ENCODE measurements at regions of chr19 and their contacts with region 1.

Region 1: DNA sequence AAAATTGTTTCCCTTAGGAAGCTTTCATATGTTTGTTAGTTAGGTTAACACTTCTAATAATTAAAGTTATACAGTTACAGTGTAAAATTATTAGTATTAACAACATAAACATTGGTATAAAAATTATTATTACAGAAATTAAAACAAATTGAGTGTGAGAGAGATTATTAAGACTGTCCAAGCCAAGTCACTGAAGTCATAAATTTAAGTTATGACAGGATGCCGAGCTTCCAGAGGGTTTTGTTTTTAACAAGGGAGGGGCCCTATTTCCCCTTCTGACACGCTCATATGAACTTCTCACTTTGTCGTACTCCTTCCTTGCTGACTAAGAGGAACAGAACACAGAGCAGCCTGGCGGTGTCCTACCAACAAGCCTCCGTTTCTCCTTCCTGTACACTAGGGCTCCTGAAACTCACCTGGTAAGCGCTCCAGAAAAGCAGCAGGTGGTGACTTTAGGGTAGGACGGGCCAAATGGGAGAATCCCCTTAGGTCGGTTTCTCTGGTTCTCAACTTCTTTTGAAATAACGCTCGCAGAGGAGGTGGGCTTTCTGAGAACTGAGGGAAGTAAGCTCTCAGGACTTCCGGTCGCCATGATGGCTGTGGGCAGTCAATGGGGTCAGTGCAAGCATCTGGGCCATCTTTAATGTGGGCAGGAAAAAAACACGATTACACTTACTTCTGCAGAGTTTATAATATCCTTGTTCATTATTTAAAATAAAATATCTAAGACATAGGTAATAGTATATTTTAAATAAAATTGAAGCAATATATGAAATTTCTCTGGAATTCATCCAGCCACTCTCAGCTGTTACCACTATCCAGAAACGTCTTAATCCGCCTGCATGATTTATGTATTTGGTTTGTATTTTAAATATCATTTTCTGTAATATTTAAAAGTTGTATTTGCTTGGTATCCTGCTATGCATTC is at the start of gene CARD8:
- DNase-seq: peak; percentile 80
- H3K4me3 Mint-ChIP-seq: peak within 1 kb of the TSS; percentile 96
- H3K27ac Mint-ChIP-seq: peak within 1 kb of the TSS; percentile 98
- H3K4me1 Mint-ChIP-seq: peaks cover 79% of the 10 kb centered on the region
- H3K27me3 Mint-ChIP-seq: no peaks in the 10 kb centered on the region
- total RNA-seq, gene CARD8: 117 and 130 TPM in 2 replicates

Region 2: DNA sequence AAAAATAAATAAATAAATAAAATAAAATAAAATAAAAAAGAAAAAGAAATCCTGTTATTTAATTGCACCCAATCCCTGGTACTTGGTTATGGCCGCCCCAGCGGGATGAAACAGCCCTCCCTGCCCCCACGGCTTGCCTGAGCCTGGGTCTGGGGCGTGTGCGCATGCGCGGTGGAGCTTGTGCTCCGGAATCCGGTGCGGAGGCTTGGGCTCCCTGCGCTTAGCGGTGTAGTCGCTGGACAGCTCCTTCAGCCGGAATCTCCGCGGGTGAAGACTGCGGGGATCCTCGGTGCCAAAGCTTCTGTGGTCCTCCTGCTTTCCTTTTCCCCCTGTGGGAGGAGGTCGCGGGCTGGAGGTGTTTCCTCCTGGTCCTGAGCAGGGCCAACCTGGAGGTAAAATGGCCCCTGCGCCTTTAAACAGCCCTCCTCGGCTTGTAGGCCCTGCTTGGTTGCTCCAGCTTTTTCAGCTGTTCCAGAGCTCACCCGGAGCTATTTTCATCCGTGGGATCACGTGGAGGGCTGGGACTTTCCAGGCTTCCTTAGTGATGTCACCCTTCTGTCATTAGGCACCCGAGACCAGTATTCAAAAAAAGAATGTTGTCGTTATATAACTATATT is 145.2 kb before region 1 on chr19 and contains the start of gene PLA2G4C:
- intact Hi-C with region 1: loop called (anchors 2 kb)
- DNase-seq: peak; percentile 76
- H3K4me3 Mint-ChIP-seq: peak within 1 kb of the TSS; percentile 89
- H3K27ac Mint-ChIP-seq: peak within 1 kb of the TSS; percentile 93
- H3K4me1 Mint-ChIP-seq: peaks cover 15% of the 10 kb centered on the region
- H3K27me3 Mint-ChIP-seq: no peaks in the 10 kb centered on the region
- total RNA-seq, gene PLA2G4C: 12.2 and 12.7 TPM in 2 replicates

Region 3: GRCh38 chr19:48170038-48170812 is 85.4 kb before region 1 on chr19 and contains the starts of genes LIG1 and ZSWIM9:
- intact Hi-C with region 1: loop called (anchors 1 kb)
- DNase-seq: peak; percentile 89
- H3K4me3 Mint-ChIP-seq: peak within 1 kb of the TSS; percentile 97
- H3K27ac Mint-ChIP-seq: peak within 1 kb of the TSS; percentile 100
- H3K4me1 Mint-ChIP-seq: peaks cover 33% of the 10 kb centered on the region
- H3K27me3 Mint-ChIP-seq: peaks cover 3% of the 10 kb centered on the region
- total RNA-seq, gene LIG1: 133 and 140 TPM in 2 replicates
- total RNA-seq, gene ZSWIM9: 8.4 and 9.5 TPM in 2 replicates

Region 4: GRCh38 chr19:48203732-48204628 is 51.7 kb before region 1 on chr19:
- intact Hi-C with region 1: loop called (anchors 1 kb)
- DNase-seq: peak; percentile 92
- H3K4me3 Mint-ChIP-seq: no peak overlapping the region
- H3K27ac Mint-ChIP-seq: no peak overlapping the region
- H3K4me1 Mint-ChIP-seq: peaks cover 13% of the 10 kb centered on the region
- H3K27me3 Mint-ChIP-seq: no peaks in the 10 kb centered on the region

Region 5: DNA sequence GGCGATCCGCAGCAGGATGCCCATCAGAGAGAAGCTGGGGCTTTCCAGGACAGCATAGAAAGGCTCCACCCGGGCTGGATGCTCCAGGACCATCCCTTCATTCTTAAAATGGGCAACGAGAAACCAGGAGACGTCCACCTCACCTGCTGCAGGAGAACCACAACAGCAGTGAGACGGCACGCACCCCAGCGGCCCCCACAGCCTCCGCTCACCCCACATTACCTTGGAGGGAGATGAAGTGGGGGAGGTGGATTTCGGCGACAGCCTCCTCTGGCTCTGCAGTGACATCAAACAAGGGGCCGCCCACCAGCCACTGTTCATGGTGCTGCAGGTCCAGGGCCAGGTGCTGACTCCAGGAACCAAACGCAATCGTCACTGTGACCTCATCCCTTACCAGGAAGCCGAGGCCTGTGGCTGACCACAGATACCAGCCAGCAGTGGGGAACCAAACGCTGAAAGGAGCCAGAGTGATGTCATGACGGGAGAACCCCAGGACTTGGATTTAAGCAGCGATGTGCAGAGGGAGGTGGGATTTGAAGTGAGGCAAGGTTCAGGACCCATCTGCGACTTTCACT is 25.0 kb before region 1 on chr19:
- intact Hi-C with region 1: loop called (anchors 2 kb)
- DNase-seq: peak; percentile 35
- H3K4me3 Mint-ChIP-seq: no peak overlapping the region
- H3K27ac Mint-ChIP-seq: peak overlapping the region; percentile 57
- H3K4me1 Mint-ChIP-seq: peaks cover 26% of the 10 kb centered on the region
- H3K27me3 Mint-ChIP-seq: no peaks in the 10 kb centered on the region

Measured in activated T-helper 1 cell treated with anti-CD3 and anti-CD28 coated beads, Interleukin-12 subunit alpha, Interleukin-12 subunit beta, Interleukin-2, Interleukin-4 antibody, amounts not matched to agents 30 ng/mL and 10 ng/mL and 1 ng/mL, durations not matched to agents 14 hours and 24 hours and 36 hours (primary cell).